A673 (cell line): ENCODE measurements at regions of chr17 and their contacts with region 1.

Region 1: GRCh38 chr17:66981983-66982508 is 17.5 kb downstream of the CACNG4 start:
- DNase-seq: no peak
- H3K4me3 ChIP-seq: no peak overlapping the region
- H3K27ac ChIP-seq: no peak overlapping the region
- H3K4me1 ChIP-seq: no peaks in the 10 kb centered on the region
- H3K27me3 ChIP-seq: no peaks in the 10 kb centered on the region
- CTCF ChIP-seq: no peak

Region 2: DNA sequence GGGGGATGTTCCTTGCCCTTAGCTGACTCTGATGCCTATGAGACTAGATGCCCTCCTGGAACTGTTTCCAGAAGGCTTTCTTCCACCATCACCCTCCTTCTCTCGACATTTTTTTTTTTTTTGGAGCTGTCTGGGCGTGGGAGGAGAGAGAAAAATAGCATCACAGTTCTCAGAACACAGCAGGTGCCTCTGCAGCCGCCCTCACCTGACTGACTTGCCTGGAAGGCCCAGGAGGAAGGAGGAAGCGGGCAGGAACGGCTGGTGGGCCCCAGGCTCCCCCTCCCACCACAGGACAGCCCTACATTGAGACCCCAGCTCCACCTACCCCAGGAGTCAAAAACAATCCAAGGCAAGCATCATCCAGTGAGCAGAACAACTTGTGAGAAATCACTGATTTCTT is 167.5 kb before region 1 on chr17:
- CTCF ChIA-PET with region 1: no interaction called
- POLR2A ChIA-PET with region 1: no interaction called
- intact Hi-C with region 1: no loop called
- DNase-seq: no peak
- H3K4me3 ChIP-seq: no peak overlapping the region
- H3K27ac ChIP-seq: no peak overlapping the region
- H3K4me1 ChIP-seq: no peaks in the 10 kb centered on the region
- H3K27me3 ChIP-seq: no peaks in the 10 kb centered on the region
- CTCF ChIP-seq: no peak

Region 3: DNA sequence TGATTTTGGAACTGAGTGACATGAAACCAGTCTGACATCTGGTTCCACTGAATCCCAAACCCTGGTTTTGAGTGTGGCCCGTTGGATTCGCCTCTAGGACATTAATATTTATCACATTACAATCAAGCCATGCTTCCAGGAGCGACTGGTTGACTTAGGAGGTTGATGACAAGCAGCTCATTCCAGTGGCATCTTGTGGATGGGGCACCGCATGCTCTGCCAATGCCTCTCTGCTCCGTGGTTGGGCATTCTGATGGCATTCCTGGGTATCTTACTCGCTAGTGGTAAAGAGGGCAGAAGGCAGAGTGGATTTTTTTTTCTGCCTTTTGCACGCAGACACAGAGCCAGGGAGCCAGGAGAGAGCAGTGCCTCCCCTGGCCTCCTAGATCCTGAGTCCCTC is 13.9 kb after region 1 on chr17:
- CTCF ChIA-PET with region 1: no interaction called
- POLR2A ChIA-PET with region 1: no interaction called
- intact Hi-C with region 1: no loop called
- DNase-seq: no peak
- H3K4me3 ChIP-seq: no peak overlapping the region
- H3K27ac ChIP-seq: no peak overlapping the region
- H3K4me1 ChIP-seq: no peaks in the 10 kb centered on the region
- H3K27me3 ChIP-seq: no peaks in the 10 kb centered on the region
- CTCF ChIP-seq: no peak

Region 4: DNA sequence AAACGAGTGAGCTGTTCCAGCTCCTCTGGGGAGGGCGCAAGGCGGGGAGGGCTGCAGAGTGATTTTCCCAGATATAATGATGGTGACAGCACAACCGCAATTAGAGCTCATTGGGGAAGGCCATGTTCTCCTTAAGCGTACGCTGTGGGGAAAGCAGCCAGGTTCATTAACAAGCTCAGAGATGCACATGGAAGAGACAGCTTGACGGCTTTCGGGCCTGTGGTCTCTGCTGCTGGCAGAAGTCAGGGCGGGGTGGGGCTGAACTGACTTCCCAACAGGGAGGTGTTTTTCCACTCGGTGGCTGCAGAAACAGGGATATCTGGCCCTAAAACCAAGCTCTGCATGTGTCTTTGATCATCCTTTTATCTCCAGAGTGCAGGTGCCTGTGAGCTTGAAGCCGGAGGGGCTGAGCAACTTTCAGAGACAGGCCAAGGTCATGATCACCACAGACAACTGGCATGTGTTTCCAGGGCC is 38.3 kb after region 1 on chr17:
- CTCF ChIA-PET with region 1: no interaction called
- POLR2A ChIA-PET with region 1: no interaction called
- intact Hi-C with region 1: loop called (anchors 5 kb)
- DNase-seq: no peak
- H3K4me3 ChIP-seq: no peak overlapping the region
- H3K27ac ChIP-seq: no peak overlapping the region
- H3K4me1 ChIP-seq: no peaks in the 10 kb centered on the region
- H3K27me3 ChIP-seq: no peaks in the 10 kb centered on the region
- CTCF ChIP-seq: no peak